ENCODE measurements at regions of chr17 and their contacts with region 1.

Region 1: DNA sequence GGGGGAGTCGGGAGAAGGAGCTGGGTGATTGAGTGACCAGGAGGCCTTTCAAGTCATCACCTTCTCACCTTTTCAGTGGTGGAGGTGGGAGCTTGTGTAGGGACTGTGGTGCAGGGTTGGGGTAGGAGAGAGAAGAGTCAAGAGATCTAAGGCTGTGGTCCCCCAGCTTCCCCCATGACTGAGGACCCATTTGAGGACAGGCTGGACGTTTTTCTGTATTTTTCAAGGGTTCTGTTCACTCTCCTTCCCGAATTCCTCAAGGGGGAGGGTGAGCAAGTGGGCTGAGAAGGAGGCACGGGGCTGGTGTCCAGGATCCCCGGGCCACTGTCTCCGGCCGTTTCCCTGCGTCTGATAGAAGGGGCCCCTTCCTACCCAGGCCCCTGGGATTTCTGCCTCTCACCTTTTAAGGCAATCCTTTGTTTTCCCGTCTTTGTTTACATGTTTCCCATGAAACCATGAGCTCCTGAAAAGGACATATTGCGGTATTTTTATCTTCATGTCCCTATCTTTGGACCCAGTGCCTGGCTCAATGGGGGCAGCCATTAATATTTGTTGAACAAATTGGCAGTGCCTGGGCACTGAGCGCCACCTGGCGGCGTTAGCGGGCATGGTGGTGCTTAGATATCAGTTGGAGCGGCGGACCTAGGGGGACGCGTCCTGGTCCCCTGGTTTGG is 9.2 kb upstream of the CD300A start:
- DNase-seq: peak; percentile 74
- CTCF ChIP-seq: peak; percentile 99

Region 2: GRCh38 chr17:74408262-74408661 is 49.0 kb before region 1 on chr17:
- CTCF ChIA-PET with region 1: interaction called, 27 read pairs
- POLR2A ChIA-PET with region 1: no interaction called
- DNase-seq: no peak
- CTCF ChIP-seq: no peak

Region 3: GRCh38 chr17:74437702-74438101 is 19.6 kb before region 1 on chr17:
- CTCF ChIA-PET with region 1: interaction called, 52 read pairs
- POLR2A ChIA-PET with region 1: no interaction called
- DNase-seq: no peak
- CTCF ChIP-seq: peak; percentile 65

Region 4: DNA sequence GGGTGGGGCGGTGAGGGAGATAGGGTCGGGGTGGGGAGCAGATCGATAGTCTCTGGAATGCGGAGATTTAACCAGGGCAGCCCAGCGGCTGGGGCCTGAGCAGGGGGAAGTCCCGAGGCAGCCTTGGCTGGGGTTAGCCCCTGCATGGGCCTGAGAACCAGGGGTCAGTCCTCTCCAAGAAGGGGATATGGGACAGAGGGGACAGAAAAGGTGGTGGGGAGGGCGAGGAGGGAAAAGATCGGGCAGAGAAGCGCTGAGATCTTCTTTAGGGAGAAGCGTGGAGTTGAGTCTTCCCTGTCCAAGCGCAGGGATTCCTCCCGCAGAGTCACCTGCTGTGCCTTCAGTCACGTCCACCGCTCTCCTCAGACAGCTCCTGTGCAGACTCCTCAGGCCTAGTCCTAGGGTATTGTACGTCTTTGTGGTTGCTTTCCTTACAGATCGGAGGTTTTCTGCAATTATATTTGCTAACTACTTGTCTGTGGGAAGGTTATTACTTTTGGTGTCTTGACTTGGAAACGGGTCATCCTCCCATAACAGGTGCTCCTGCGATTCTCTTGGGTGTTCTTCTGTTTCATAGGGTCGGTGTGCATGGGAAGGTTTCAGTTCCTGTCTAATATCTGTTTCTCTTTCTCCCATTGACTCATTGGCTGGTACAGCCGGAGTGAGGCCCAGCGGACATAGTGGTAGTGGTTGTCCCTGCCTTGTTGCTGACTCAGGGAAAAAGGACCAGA is 10.1 kb after region 1 on chr17:
- CTCF ChIA-PET with region 1: interaction called, 14 read pairs
- POLR2A ChIA-PET with region 1: no interaction called
- DNase-seq: peak; percentile 82
- CTCF ChIP-seq: no peak

Region 5: GRCh38 chr17:74528491-74529199 is 71.4 kb after region 1 on chr17:
- CTCF ChIA-PET with region 1: interaction called, 10 read pairs
- POLR2A ChIA-PET with region 1: no interaction called
- DNase-seq: peak; percentile 77
- CTCF ChIP-seq: no peak

Region 6: DNA sequence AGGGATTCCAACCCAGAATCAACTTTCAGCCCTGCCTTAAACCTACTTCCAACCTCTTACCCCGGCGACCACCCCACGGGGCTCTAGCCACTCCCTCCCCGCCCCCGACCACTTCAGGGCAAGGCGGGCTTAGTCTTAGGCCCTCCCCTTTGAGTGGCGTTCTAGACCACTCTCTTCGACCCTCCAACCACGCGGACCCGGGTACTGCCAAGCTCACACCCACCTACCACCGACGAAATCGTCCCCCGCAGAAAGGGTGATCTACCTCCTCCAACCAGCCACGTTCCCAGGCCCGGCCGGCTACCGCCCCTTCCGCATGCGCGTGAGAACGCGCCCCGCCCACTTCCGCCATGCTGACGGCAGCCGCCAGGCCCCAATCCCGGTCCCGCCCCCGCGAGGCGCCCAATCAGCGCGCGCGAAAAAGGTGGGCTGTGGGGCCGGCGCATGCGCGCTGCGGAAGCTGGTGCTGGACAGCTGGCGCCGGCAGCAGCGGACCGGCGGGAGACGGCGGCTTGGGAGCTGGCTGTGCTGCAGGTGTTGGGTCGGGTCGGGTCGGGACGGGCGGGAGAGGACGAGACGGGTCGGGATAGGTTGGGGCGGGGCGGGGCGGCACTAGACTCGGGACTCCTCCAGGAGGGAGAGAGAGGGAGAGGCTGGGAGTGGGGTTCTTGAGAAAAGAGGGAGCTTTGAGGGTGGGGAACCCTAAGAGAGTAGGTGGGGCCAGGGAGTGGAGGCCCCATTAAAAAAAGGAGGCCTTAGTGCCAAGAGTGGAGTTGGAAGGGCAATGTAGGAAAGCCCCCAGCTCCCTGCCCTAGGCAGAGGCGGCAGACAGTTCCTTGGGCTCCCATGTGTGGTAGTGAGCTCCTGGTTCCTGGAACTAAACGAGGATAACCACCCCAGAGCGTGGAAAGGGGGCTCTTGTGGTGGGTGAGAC is 319.0 kb after region 1 on chr17 and contains the start of gene NAT9:
- CTCF ChIA-PET with region 1: no interaction called
- POLR2A ChIA-PET with region 1: no interaction called
- DNase-seq: peak; percentile 100
- CTCF ChIP-seq: no peak

Measured in GM10248 (cell line).